Gastrocnemius medialis (tissue), 4 donors: ENCODE measurements at regions of chr1 and their contacts with region 1.

Region 1: GRCh38 chr1:151611832-151612500 is at the start of gene SNX27:
- DNase-seq: peak; percentile 93 to 94
- ATAC-seq: peak; percentile 93 to 94
- H3K4me3 ChIP-seq: peak within 1 kb of the TSS; percentile 76 to 86 (median 80)
- H3K27ac ChIP-seq: peak within 1 kb of the TSS; percentile 80 to 97 (median 94)
- H3K4me1 ChIP-seq: peaks cover 29 to 42% of the 10 kb centered on the region in 2 donors
- H3K27me3 ChIP-seq: no peaks in the 10 kb centered on the region
- CTCF ChIP-seq: no peak
- POLR2A ChIP-seq: peak; percentile 85 to 87
- total RNA-seq, gene SNX27: 37.0 to 43.7 (median 40.9) TPM

Region 2: DNA sequence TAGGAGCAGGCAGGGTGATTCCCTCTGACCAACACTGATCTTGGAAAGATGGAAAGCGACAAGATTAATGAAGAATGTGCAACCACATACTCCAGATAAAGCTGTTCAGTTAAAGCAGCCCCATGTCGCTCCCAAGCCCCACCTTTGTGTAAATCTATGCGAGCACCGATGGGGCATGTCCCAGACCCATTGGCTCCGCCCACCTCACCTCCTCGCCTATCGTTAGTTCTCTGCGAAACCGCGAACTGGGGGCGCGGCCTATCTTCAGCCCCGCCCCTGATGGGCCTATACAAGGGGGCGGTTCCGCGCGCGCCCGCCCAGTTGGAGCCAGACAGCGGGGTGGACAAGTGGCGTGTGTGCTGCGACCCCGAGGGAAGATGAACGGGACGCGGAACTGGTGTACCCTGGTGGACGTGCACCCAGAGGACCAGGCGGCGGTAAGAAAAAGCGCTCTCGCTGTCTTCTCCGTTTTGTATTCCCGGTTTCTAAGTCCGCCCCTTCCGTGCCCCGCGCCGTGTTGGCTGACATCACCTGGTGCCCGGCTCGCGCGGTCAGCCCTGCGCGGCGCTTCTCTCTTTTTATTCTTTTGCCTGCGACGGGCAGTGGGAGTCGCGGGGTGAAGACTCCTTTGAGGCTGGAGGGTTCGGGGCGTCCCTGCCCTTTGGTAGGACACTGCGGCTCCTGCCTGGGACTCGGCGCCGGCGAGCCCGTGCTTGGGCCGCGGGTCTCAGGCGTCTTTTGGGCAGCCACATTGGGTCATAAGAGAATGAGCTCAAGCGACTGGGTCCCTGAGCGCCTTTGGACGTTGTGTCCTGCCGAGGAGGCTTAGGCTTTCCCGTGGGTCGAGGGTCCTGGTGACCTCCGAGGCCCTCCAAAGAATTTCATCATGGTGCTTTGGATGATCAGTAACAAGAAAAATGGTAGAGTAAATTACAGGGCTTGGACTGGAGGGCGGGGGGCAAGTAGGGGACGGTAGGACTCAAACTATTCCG is 71.7 kb before region 1 on chr1 and contains the start of gene TUFT1:
- in situ Hi-C with region 1: no loop called
- intact Hi-C with region 1: loop called (anchors 1 kb)
- DNase-seq: peak; percentile 86 to 89
- ATAC-seq: peak; percentile 94 to 96
- H3K4me3 ChIP-seq: peak within 1 kb of the TSS; percentile 65 to 84 (median 72)
- H3K27ac ChIP-seq: peak within 1 kb of the TSS; percentile 61 to 76 (median 72)
- H3K4me1 ChIP-seq: peaks cover 4 to 19% of the 10 kb centered on the region in 2 donors
- H3K27me3 ChIP-seq: no peaks in the 10 kb centered on the region
- CTCF ChIP-seq: no peak
- POLR2A ChIP-seq: peak; percentile 86 to 96
- total RNA-seq, gene TUFT1: 1.2 to 4.0 (median 2.7) TPM

Region 3: GRCh38 chr1:151720974-151721787 is 109.2 kb after region 1 on chr1 and contains the start of gene RIIAD1:
- in situ Hi-C with region 1: no loop called
- intact Hi-C with region 1: loop called (anchors 5 kb)
- DNase-seq: no peak
- ATAC-seq: peak; percentile 75 to 82
- H3K4me3 ChIP-seq: peak within 1 kb of the TSS; percentile 59 to 95 (median 62)
- H3K27ac ChIP-seq: peak within 1 kb of the TSS; percentile 77 to 87 (median 81)
- H3K4me1 ChIP-seq: peaks cover 8 to 20% of the 10 kb centered on the region in 2 donors
- H3K27me3 ChIP-seq: peaks cover 5 to 21% (median 15%) of the 10 kb centered on the region in 3 donors
- CTCF ChIP-seq: no peak
- POLR2A ChIP-seq: no peak
- total RNA-seq, gene RIIAD1: not detected

Region 4: DNA sequence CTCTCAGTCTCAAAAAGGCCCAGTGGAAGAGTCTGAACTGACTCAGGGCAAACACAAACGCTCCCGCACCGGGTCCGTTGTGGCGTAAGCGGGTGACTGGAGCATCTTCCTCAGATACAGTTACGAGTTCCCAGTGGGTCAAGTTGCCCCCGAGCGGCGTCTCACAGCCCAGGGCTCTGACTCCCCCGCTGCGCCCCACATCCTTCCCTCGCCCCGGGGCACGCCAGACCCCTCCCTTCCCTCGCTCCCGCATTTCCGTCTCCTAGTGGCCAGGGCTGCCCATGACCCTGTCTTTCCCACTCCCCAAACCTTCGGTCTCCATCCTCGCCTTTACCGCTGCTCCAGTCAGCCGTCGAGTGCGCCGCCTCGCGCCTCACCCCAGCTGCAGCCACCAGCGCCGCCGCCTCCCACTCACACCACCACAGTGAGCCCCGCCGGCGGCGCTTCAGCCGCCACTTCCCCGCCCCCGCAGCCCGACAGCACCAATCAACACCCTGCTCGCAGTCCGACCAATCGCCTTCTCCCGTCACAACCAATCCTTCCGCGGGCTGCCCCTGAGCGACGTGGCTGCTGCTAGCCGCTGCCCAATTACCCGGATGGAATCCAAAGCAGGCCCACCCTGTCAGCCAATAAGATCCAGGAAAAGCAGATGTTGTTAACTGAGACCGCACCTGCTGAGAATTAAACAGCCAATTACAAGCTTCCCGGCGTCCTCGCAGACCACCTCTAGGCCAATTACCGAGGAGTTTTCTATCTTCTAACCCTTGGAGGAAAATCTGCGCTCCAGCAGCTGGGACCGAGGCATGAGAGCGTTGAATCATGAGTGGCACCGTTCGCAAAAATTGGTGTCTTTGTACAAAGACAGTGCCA is 178.3 kb after region 1 on chr1 and contains the start of gene TDRKH:
- in situ Hi-C with region 1: no loop called
- intact Hi-C with region 1: loop called (anchors 1 kb)
- DNase-seq: peak; percentile 99
- ATAC-seq: peak; percentile 99
- H3K4me3 ChIP-seq: peak within 1 kb of the TSS; percentile 63 to 88 (median 84)
- H3K27ac ChIP-seq: peak within 1 kb of the TSS; percentile 75 to 80 (median 80)
- H3K4me1 ChIP-seq: peaks cover 12 to 14% of the 10 kb centered on the region in 2 donors
- H3K27me3 ChIP-seq: no peaks in the 10 kb centered on the region
- CTCF ChIP-seq: peak in 3 of 5 experiments; percentile 23 to 40 (median 39)
- POLR2A ChIP-seq: peak; percentile 65 to 86
- total RNA-seq, gene TDRKH: 3.9 to 8.3 (median 4.6) TPM